RWPE1 (cell line): ENCODE measurements at regions of chr3 and their contacts with region 1.

Region 1: DNA sequence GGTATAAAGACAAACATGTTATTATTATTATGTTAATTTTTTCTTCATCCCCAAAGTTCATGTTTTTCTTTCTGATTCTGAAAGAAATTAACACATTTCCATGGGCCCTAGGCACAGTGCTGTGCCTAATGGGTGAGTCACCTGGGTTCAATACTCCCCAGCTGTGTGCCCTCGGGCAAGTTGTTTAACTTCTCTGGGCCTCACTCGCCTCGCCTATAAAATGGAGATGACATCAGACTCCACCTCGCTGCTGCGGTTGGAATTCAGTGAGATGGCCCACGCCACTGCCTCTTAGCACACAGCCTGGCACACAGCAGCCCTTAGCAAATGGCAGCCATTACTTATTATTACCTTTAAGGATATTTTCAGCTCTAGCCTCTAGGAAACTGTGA is 22.6 kb downstream of the DNASE1L3 start:
- DNase-seq: peak; percentile 52
- H3K27ac ChIP-seq: peak overlapping the region; percentile 39
- CTCF ChIP-seq: no peak

Region 2: DNA sequence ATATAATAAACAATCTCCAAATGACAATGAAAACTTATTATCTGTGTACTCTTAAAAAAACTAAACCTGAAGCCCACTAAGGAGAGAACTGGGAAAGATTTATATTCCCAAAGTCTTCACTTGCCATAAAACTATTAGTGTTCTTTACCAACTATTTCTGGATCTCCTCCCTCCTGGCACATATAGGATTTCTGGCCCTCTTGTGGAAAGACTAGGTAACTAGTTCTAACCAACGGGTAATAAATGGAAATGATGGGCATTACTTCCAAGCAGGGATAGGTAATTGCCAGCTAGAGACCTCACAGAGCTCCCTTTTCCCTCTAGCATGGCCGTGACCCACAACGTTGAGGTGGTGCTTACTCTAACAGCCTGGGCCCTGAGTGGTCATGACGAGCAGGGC is 754.1 kb before region 1 on chr3:
- CTCF ChIA-PET with region 1: no interaction called
- POLR2A ChIA-PET with region 1: no interaction called
- DNase-seq: peak; percentile 31
- H3K27ac ChIP-seq: no peak overlapping the region
- CTCF ChIP-seq: peak; percentile 46

Region 3: DNA sequence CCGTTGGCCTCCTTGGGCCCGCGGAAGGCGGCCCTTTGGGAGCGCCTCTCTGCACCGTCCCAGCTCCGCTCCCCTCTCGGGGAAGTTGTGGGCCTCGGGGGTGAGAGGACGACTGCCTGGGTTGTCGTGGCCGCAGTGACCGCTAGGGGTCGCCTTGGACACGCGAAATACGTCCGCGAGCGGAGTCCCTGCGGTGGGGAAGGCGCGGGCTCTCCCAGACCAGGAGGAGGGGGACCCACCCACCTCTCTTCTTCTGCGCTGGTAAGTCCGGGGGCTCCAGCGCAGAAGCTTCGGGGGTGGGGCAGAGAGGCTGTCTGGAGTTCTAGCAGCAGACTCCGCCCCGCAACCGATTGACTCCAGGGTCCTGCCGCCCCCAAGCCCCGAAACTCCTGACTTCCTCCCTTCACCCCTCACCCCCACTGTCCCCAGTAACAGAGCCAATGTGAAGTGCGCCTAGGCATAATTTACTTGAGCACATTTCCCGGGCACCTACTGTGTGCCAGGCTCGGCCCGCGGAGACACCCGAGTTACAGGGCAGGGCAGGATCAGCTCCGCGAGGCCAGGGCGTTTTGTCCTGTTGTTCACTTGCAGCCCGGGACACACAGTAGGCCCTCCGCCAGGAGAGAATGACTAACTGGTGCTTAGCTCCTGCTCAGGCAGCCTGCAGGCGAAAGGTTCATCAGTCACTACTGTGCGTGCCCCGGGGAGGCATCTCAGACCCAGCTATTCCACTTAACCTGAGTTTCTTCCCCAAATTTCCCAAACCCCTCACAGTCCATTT is 10.2 kb before region 1 on chr3:
- CTCF ChIA-PET with region 1: interaction called, 12 read pairs
- POLR2A ChIA-PET with region 1: no interaction called
- DNase-seq: peak; percentile 64
- H3K27ac ChIP-seq: peak overlapping the region; percentile 76
- CTCF ChIP-seq: peak; percentile 93

Region 4: GRCh38 chr3:58254144-58254543 is 66.0 kb after region 1 on chr3:
- CTCF ChIA-PET with region 1: no interaction called
- POLR2A ChIA-PET with region 1: no interaction called
- DNase-seq: no peak
- H3K27ac ChIP-seq: no peak overlapping the region
- CTCF ChIP-seq: no peak

Region 5: DNA sequence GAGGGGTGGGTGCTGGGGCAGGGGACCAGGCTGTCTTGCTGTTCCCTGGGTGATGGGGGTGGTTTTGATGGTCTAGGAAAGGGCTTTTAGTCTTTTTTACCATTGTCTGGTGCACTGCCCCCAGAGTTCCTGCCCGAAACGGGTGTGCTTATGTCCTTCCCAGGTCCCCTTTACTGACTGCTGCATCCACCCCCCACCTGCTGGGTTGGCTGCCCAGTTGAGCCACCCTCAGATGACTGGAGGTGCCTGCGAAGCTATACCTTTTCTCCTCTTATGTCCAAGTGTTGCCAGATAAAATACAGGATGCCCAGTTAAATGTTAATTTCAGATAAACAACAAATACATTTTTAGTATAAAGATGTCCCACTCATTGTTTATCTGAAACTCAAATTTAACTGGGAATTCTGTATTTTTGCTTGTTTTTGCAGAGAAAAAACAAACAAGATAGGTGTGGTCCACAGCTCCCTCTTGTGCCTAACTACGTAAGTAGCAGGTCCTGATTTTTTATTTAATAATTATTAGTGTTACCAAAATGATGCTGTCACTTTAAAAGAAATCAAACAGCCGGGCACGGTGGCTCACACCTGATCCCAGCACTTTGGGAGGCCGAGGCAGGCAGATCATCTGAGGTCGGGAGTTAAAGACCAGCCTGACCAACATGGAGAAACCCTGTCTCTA is 111.8 kb after region 1 on chr3:
- CTCF ChIA-PET with region 1: interaction called, 21 read pairs
- POLR2A ChIA-PET with region 1: no interaction called
- DNase-seq: peak; percentile 13
- H3K27ac ChIP-seq: no peak overlapping the region
- CTCF ChIP-seq: peak; percentile 77